CD4-positive, alpha-beta memory T cell (primary cell): ENCODE measurements at regions of chr11 and their contacts with region 1.

Region 1: GRCh38 chr11:71977743-71978418 is 20.8 kb upstream of the IL18BP start:
- DNase-seq: peak in 4 of 5 donors; percentile 33 to 47 (median 44)
- H3K4me3 ChIP-seq: no peak overlapping the region
- H3K4me3 Mint-ChIP-seq: no peak overlapping the region
- H3K27ac ChIP-seq: no peak overlapping the region
- H3K27ac Mint-ChIP-seq: peak overlapping the region in 1 of 7 donors; percentile 77
- H3K4me1 ChIP-seq: no peaks in the 10 kb centered on the region
- H3K4me1 Mint-ChIP-seq: peaks cover 0 to 5% (median 3%) of the 10 kb centered on the region in 4 donors
- H3K27me3 ChIP-seq: no peaks in the 10 kb centered on the region
- H3K27me3 Mint-ChIP-seq: no peaks in the 10 kb centered on the region

Region 2: GRCh38 chr11:71991494-71991893 is 13.6 kb after region 1 on chr11:
- CTCF ChIA-PET with region 1: interaction called, 14 read pairs
- POLR2A ChIA-PET with region 1: interaction called, 4 read pairs
- intact Hi-C with region 1: no loop called
- DNase-seq: no peak
- H3K4me3 ChIP-seq: no peak overlapping the region
- H3K4me3 Mint-ChIP-seq: no peak overlapping the region
- H3K27ac ChIP-seq: no peak overlapping the region
- H3K27ac Mint-ChIP-seq: peak overlapping the region in 2 of 7 donors; percentile 0 to 64
- H3K4me1 ChIP-seq: no peaks in the 10 kb centered on the region
- H3K4me1 Mint-ChIP-seq: peaks cover 0 to 4% (median under 1%) of the 10 kb centered on the region in 4 donors
- H3K27me3 ChIP-seq: no peaks in the 10 kb centered on the region
- H3K27me3 Mint-ChIP-seq: no peaks in the 10 kb centered on the region

Region 3: GRCh38 chr11:72015511-72016171 is 37.8 kb after region 1 on chr11:
- CTCF ChIA-PET with region 1: interaction called, 10 read pairs
- POLR2A ChIA-PET with region 1: no interaction called
- intact Hi-C with region 1: no loop called
- DNase-seq: no peak
- H3K4me3 ChIP-seq: no peak overlapping the region
- H3K4me3 Mint-ChIP-seq: no peak overlapping the region
- H3K27ac ChIP-seq: no peak overlapping the region
- H3K27ac Mint-ChIP-seq: peak overlapping the region in 2 of 7 donors; percentile 53 to 65
- H3K4me1 ChIP-seq: no peaks in the 10 kb centered on the region
- H3K4me1 Mint-ChIP-seq: peaks cover 0 to 4% (median 2%) of the 10 kb centered on the region in 4 donors
- H3K27me3 ChIP-seq: no peaks in the 10 kb centered on the region
- H3K27me3 Mint-ChIP-seq: no peaks in the 10 kb centered on the region

Region 4: DNA sequence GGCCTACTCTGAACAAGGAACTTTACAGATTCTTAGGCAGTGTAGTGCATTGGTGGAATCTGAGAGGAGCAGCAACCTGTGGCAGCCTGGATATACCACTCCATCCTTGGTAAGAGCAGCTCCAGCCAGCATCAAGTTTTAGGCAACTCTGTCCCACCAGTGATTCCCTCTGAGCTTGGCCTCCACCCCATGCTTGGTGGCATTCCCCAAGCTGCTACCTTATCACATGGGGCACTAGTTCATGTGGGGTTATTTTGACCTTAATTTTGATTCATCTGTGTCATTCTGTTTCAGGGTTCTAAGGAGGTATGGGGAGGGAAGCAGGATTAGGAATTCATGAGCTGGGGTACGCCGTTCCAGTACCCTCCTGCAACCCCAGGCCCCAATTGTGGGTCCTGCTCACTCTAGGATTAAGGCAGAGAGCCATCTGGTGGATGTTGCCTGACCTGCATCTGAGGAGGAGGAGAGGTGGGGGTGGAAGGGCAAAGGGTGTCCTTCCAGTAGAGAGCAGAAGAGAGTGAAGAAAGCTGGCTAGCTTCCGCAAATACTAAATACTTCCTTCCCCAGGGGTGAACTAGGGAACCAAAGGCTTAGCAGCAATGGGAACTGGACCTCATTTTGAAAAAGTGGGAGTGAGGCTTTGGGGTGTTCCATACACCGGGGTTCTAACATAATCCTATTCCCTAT is 113.3 kb after region 1 on chr11:
- CTCF ChIA-PET with region 1: interaction called, 50 read pairs
- POLR2A ChIA-PET with region 1: interaction called, 3 read pairs
- intact Hi-C with region 1: loop called (anchors 1 kb)
- DNase-seq: peak; percentile 57 to 80 (median 66)
- H3K4me3 ChIP-seq: no peak overlapping the region
- H3K4me3 Mint-ChIP-seq: no peak overlapping the region
- H3K27ac ChIP-seq: no peak overlapping the region
- H3K27ac Mint-ChIP-seq: peak overlapping the region; percentile 10 to 91 (median 81)
- H3K4me1 ChIP-seq: no peaks in the 10 kb centered on the region
- H3K4me1 Mint-ChIP-seq: peaks cover 4 to 11% (median 9%) of the 10 kb centered on the region in 4 donors
- H3K27me3 ChIP-seq: no peaks in the 10 kb centered on the region
- H3K27me3 Mint-ChIP-seq: no peaks in the 10 kb centered on the region

Region 5: DNA sequence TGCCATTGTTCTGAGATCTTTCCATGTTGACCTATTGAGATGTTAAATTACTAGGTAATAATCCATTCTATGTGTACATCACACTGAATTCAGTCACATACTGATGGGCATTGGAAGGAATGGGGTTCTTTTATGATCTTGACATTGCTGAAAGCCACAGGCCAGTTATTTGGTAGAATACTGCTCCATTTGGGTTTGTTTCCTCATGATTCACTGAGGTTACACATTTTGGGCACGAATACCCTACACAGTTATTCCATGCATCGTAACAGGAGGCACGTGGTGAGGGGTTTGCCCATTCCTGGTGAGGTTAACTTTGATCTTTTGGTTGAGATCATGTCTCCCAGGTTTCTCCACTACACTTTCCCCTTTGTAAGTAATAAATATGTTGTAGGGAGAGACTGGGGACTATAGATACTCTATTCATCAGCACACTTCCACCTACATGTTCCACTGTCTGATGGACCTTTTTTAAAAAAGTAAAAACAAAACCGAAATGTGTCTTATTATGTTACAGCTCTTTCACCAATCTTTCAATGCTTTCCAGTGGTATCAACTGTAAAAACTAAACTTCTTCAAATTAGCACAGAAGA is 202.0 kb after region 1 on chr11:
- CTCF ChIA-PET with region 1: interaction called, 18 read pairs
- POLR2A ChIA-PET with region 1: no interaction called
- intact Hi-C with region 1: loop called (anchors 1 kb)
- DNase-seq: no peak
- H3K4me3 ChIP-seq: no peak overlapping the region
- H3K4me3 Mint-ChIP-seq: no peak overlapping the region
- H3K27ac ChIP-seq: no peak overlapping the region
- H3K27ac Mint-ChIP-seq: no peak overlapping the region
- H3K4me1 ChIP-seq: no peaks in the 10 kb centered on the region
- H3K4me1 Mint-ChIP-seq: peaks cover 0 to 4% (median 3%) of the 10 kb centered on the region in 4 donors
- H3K27me3 ChIP-seq: no peaks in the 10 kb centered on the region
- H3K27me3 Mint-ChIP-seq: peaks cover 10 to 12% of the 10 kb centered on the region in 2 donors

Region 6: GRCh38 chr11:72413914-72414628 is 436.2 kb after region 1 on chr11:
- CTCF ChIA-PET with region 1: interaction called, 21 read pairs
- POLR2A ChIA-PET with region 1: no interaction called
- intact Hi-C with region 1: no loop called
- DNase-seq: peak; percentile 62 to 68 (median 63)
- H3K4me3 ChIP-seq: no peak overlapping the region
- H3K4me3 Mint-ChIP-seq: no peak overlapping the region
- H3K27ac ChIP-seq: no peak overlapping the region
- H3K27ac Mint-ChIP-seq: no peak overlapping the region
- H3K4me1 ChIP-seq: peaks cover under 1% of the 10 kb centered on the region
- H3K4me1 Mint-ChIP-seq: peaks cover 4 to 17% (median 9%) of the 10 kb centered on the region in 4 donors
- H3K27me3 ChIP-seq: no peaks in the 10 kb centered on the region
- H3K27me3 Mint-ChIP-seq: no peaks in the 10 kb centered on the region